GM10248 (cell line): ENCODE measurements at regions of chr10 and their contacts with region 1.

Region 1: GRCh38 chr10:113704637-113705343 is 25.1 kb downstream of the CASP7 start:
- DNase-seq: no peak
- CTCF ChIP-seq: peak; percentile 74

Region 2: GRCh38 chr10:113689057-113689456 is 15.7 kb before region 1 on chr10:
- CTCF ChIA-PET with region 1: interaction called, 15 read pairs
- POLR2A ChIA-PET with region 1: no interaction called
- DNase-seq: no peak
- CTCF ChIP-seq: no peak